ENCODE measurements at regions of chr17 and their contacts with region 1.

Region 1: GRCh38 chr17:28902819-28903545 is at the start of gene DHRS13:
- DNase-seq: peak; percentile 92 to 99 (median 96)
- ATAC-seq: peak; percentile 96
- H3K4me3 ChIP-seq: peak within 1 kb of the TSS; percentile 77
- H3K4me3 Mint-ChIP-seq: peak within 1 kb of the TSS; percentile 85 to 98 (median 94)
- H3K27ac ChIP-seq: peak within 1 kb of the TSS; percentile 87
- H3K27ac Mint-ChIP-seq: peak within 1 kb of the TSS; percentile 81 to 96 (median 90)
- H3K4me1 ChIP-seq: peaks cover 18 to 29% of the 10 kb centered on the region in 2 donors
- H3K4me1 Mint-ChIP-seq: peaks cover 13 to 53% (median 36%) of the 10 kb centered on the region in 7 donors
- H3K27me3 ChIP-seq: no peaks in the 10 kb centered on the region
- H3K27me3 Mint-ChIP-seq: no peaks in the 10 kb centered on the region
- total RNA-seq, gene DHRS13: 20.0 to 51.3 (median 30.4) TPM

Region 2: DNA sequence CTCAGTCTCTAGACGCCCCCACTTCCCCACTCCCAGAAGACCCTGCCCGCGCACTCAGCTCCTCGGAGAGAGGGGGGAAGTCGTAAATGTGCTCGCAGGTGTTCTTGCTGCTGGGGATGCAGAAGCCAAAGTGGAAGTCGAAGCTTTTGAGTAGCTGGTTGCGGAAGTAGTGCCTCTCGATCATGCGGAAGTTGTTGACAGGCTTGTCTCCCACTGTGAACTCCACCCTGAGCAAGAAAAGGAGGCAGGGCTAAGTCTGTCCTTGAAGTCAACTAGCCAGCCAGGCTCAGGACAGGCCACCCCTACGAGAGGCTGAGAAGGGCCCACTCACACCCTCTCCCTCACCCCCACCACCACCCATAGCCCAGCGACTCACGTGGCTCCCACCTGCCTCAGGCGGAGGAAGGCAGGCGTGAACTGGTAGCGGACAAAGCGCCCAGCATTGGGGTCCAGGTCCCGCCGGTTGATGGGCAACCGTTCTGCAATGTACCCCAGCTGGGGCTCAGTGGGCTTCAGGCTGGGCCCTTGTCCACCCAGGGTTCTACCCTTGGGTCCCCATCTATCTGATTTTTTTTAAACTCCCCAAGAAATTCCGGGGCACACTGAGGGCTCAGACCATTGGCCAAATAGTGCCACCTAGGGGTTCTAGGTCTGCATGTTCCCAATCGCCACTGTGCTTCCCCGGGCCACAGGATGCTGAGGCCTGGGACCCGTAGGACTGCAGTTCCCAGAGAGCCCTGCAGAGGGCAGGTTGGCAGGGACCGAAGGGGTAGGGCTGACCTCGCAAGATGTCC is 355.2 kb before region 1 on chr17:
- CTCF ChIA-PET with region 1: no interaction called
- POLR2A ChIA-PET with region 1: no interaction called
- intact Hi-C with region 1: no loop called
- DNase-seq: peak; percentile 40 to 80 (median 46)
- ATAC-seq: peak; percentile 63
- H3K4me3 ChIP-seq: no peak overlapping the region
- H3K4me3 Mint-ChIP-seq: peak overlapping the region; percentile 65 to 100 (median 76)
- H3K27ac ChIP-seq: peak overlapping the region; percentile 89
- H3K27ac Mint-ChIP-seq: peak overlapping the region; percentile 82 to 98 (median 96)
- H3K4me1 ChIP-seq: peaks cover 32 to 44% of the 10 kb centered on the region in 2 donors
- H3K4me1 Mint-ChIP-seq: peaks cover 38 to 55% (median 50%) of the 10 kb centered on the region in 7 donors
- H3K27me3 ChIP-seq: no peaks in the 10 kb centered on the region
- H3K27me3 Mint-ChIP-seq: no peaks in the 10 kb centered on the region

Region 3: GRCh38 chr17:28743225-28744103 is 159.5 kb before region 1 on chr17 and contains the start of gene TRAF4:
- CTCF ChIA-PET with region 1: no interaction called
- POLR2A ChIA-PET with region 1: no interaction called
- intact Hi-C with region 1: no loop called
- DNase-seq: peak; percentile 60 to 86 (median 73)
- ATAC-seq: peak; percentile 93
- H3K4me3 ChIP-seq: peak within 1 kb of the TSS; percentile 82
- H3K4me3 Mint-ChIP-seq: peak within 1 kb of the TSS; percentile 87 to 94 (median 91)
- H3K27ac ChIP-seq: peak within 1 kb of the TSS; percentile 83
- H3K27ac Mint-ChIP-seq: peak within 1 kb of the TSS; percentile 78 to 95 (median 92)
- H3K4me1 ChIP-seq: peaks cover 11 to 28% of the 10 kb centered on the region in 2 donors
- H3K4me1 Mint-ChIP-seq: peaks cover 2 to 42% (median 27%) of the 10 kb centered on the region in 7 donors
- H3K27me3 ChIP-seq: no peaks in the 10 kb centered on the region
- H3K27me3 Mint-ChIP-seq: no peaks in the 10 kb centered on the region
- total RNA-seq, gene TRAF4: 22.3 to 228 (median 81.6) TPM

Region 4: DNA sequence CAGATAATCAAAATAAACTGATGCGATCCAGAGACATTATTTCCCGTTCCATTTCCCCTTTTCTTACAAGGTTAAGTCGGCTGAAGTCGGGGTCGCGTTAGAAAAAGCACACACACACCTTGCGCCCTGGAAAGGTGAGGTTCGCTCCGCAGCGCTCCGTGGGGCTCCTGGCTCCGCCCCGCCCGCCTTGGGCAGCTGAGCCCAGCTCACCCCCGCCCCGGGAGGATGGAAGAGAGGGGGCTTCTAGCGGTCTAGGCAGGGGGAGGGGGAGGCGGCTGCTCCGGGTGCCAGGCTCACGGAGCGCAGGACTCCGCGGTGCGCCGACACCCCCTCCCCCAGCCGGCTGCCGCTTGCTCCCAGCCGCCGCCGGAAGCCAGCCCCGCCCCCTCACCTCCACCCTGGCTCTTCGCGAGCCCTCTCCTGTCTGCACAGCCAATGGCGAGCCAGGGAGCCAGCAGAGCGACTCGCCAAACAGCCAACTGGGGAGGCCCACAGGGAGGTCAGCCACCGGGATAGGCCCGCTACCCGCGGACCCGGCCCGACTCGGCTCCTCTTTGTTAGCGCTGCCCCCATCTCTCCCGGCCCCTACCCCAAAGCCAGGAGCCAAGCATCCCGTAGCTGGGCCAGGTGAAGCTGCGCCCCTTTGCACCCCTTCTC is 90.8 kb before region 1 on chr17:
- CTCF ChIA-PET with region 1: no interaction called
- POLR2A ChIA-PET with region 1: interaction called, 5 read pairs
- intact Hi-C with region 1: loop called in 1 of 2 experiments (anchors 1 kb)
- DNase-seq: peak; percentile 91 to 97 (median 95)
- ATAC-seq: peak; percentile 100
- H3K4me3 ChIP-seq: peak overlapping the region; percentile 85
- H3K4me3 Mint-ChIP-seq: peak overlapping the region; percentile 87 to 99 (median 92)
- H3K27ac ChIP-seq: peak overlapping the region; percentile 96
- H3K27ac Mint-ChIP-seq: peak overlapping the region; percentile 82 to 100 (median 97)
- H3K4me1 ChIP-seq: peaks cover 0 to 16% of the 10 kb centered on the region in 2 donors
- H3K4me1 Mint-ChIP-seq: peaks cover 21 to 49% (median 40%) of the 10 kb centered on the region in 7 donors
- H3K27me3 ChIP-seq: no peaks in the 10 kb centered on the region
- H3K27me3 Mint-ChIP-seq: no peaks in the 10 kb centered on the region

Region 5: DNA sequence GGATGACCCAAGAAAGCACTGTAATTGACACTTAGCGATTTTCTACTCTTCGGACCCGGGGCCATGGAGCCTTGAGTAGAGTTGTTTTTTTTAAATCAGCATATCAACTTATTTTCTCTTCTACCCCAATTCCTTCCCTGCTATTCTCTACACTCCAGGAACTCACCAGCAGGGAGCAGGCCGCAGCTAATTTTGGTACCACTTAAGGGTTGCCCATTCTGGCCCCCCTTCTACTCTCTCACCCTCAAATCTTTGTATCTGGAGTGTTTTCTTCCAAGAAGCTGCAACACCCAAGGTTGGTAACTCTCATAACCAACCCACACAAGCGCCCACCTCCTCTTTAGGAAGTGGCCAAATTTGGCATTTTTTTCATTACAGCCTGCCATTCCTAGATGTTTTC is 53.7 kb before region 1 on chr17:
- CTCF ChIA-PET with region 1: interaction called, 10 read pairs
- POLR2A ChIA-PET with region 1: interaction called, 19 read pairs
- intact Hi-C with region 1: loop called (anchors 1 kb)
- DNase-seq: no peak
- ATAC-seq: peak; percentile 51
- H3K4me3 ChIP-seq: no peak overlapping the region
- H3K4me3 Mint-ChIP-seq: no peak overlapping the region
- H3K27ac ChIP-seq: no peak overlapping the region
- H3K27ac Mint-ChIP-seq: peak overlapping the region in 1 of 9 donors; percentile 48
- H3K4me1 ChIP-seq: peaks cover 0 to 3% of the 10 kb centered on the region in 2 donors
- H3K4me1 Mint-ChIP-seq: peaks cover 0 to 6% (median 0%) of the 10 kb centered on the region in 7 donors
- H3K27me3 ChIP-seq: no peaks in the 10 kb centered on the region
- H3K27me3 Mint-ChIP-seq: no peaks in the 10 kb centered on the region

Region 6: DNA sequence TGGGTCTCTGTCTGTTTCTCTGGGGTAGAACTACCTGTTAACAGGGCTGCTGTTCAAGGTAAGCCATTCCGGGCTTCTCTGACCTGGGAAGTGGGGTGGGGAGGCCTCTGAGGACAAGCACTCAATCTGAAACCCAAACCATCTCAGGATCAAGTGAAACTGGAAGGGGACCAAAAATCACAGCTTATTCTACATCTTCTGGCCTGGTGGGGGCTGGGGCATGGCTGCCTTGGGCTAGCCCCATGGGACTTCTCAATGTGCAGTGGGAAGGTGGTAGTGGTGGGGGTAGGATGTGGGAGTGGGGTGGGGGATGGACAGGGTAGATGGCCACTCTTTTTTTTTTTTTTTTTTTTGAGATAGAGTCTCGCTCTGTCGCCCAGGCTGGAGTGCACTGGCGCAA is 11.0 kb before region 1 on chr17:
- CTCF ChIA-PET with region 1: interaction called, 6 read pairs
- POLR2A ChIA-PET with region 1: interaction called, 22 read pairs
- intact Hi-C with region 1: loop called in 1 of 2 experiments (anchors 1 kb)
- DNase-seq: no peak
- ATAC-seq: no peak
- H3K4me3 ChIP-seq: no peak overlapping the region
- H3K4me3 Mint-ChIP-seq: peak overlapping the region in 8 of 10 donors; percentile 25 to 62 (median 42)
- H3K27ac ChIP-seq: peak overlapping the region; percentile 78
- H3K27ac Mint-ChIP-seq: peak overlapping the region; percentile 74 to 99 (median 92)
- H3K4me1 ChIP-seq: peaks cover 17 to 34% of the 10 kb centered on the region in 2 donors
- H3K4me1 Mint-ChIP-seq: peaks cover 32 to 81% (median 62%) of the 10 kb centered on the region in 7 donors
- H3K27me3 ChIP-seq: no peaks in the 10 kb centered on the region
- H3K27me3 Mint-ChIP-seq: no peaks in the 10 kb centered on the region

Region 7: DNA sequence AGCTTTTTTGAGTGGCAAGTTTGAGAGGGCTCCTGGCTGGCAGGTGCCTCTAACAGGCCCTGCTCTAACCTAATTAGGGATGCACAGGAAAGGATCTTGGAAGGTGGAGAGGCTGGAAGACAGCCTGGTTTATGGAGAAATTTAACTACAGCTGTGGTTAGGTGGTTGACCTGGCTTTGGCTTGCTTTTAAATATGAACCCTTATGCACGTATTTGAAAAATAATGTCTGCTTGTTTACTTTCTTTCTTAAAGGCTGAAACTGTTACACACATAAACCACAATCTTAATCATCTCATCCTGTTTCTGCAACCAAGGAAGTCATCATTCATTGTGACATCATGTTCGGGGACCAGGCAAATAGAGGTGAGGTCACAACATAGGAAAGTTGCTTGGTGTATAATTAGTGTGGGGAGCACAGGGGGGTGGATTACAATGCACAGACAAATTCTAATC is 23.0 kb after region 1 on chr17:
- CTCF ChIA-PET with region 1: interaction called, 3 read pairs
- POLR2A ChIA-PET with region 1: interaction called, 11 read pairs
- intact Hi-C with region 1: loop called in 1 of 2 experiments (anchors 1 kb)
- DNase-seq: peak in 7 of 9 donors; percentile 66 to 89 (median 82)
- ATAC-seq: peak; percentile 96
- H3K4me3 ChIP-seq: peak overlapping the region; percentile 31
- H3K4me3 Mint-ChIP-seq: peak overlapping the region; percentile 34 to 82 (median 60)
- H3K27ac ChIP-seq: peak overlapping the region; percentile 88
- H3K27ac Mint-ChIP-seq: peak overlapping the region; percentile 93 to 99 (median 96)
- H3K4me1 ChIP-seq: peaks cover 26 to 38% of the 10 kb centered on the region in 2 donors
- H3K4me1 Mint-ChIP-seq: peaks cover 35 to 65% (median 54%) of the 10 kb centered on the region in 7 donors
- H3K27me3 ChIP-seq: no peaks in the 10 kb centered on the region
- H3K27me3 Mint-ChIP-seq: no peaks in the 10 kb centered on the region